ENCODE measurements at regions of chr7 and their contacts with region 1.

Region 1: DNA sequence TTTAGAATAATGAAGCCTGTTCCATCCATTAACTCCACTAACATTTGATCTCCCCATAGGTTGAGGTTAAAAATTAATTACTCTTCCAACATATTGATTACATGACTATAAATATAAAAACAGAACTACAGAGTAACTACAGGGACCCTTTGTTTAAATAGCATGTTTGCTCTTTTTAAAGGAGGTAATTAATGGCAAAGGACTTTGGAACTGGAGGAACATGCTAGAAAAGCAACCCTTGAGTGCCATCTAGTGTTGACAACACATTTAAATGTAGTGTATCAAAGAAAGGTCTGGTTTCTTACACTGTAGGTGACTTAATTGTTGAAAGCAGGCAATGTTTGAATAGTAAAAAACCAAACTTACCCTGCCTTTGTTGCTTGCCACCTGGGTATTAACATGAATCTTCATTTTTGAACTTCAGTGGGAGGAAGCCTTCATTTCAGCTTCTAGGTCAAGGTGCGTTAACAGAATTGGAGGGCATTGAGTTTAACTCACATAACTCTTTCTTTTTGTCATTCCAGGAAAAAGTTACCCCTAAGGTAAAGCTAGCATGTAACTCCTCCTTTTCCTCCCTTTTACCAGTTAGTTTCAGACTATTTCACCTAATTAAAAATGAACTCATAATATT is 52.6 kb upstream of the CAPZA2 start:
- DNase-seq: peak; percentile 65
- ATAC-seq: peak; percentile 41
- H3K4me3 ChIP-seq: no peak overlapping the region
- H3K4me3 Mint-ChIP-seq: no peak overlapping the region
- H3K27ac ChIP-seq: no peak overlapping the region
- H3K27ac Mint-ChIP-seq: no peak overlapping the region
- H3K4me1 ChIP-seq: no peaks in the 10 kb centered on the region
- H3K4me1 Mint-ChIP-seq: no peaks in the 10 kb centered on the region
- H3K27me3 ChIP-seq: peaks cover 0 to 4% (median 0%) of the 10 kb centered on the region in 4 experiments
- H3K27me3 Mint-ChIP-seq: peaks cover 8% of the 10 kb centered on the region
- CTCF ChIP-seq: peak; percentile 75

Region 2: GRCh38 chr7:116138202-116138801 is 671.4 kb before region 1 on chr7:
- CTCF ChIA-PET with region 1: interaction called, 8 read pairs
- POLR2A ChIA-PET with region 1: no interaction called
- intact Hi-C with region 1: loop called (anchors 1 kb)
- DNase-seq: peak; percentile 74
- ATAC-seq: peak; percentile 85
- H3K4me3 ChIP-seq: no peak overlapping the region
- H3K4me3 Mint-ChIP-seq: no peak overlapping the region
- H3K27ac ChIP-seq: no peak overlapping the region
- H3K27ac Mint-ChIP-seq: no peak overlapping the region
- H3K4me1 ChIP-seq: peaks cover 6 to 7% of the 10 kb centered on the region in 2 donors
- H3K4me1 Mint-ChIP-seq: peaks cover 23% of the 10 kb centered on the region
- H3K27me3 ChIP-seq: no peaks in the 10 kb centered on the region
- H3K27me3 Mint-ChIP-seq: no peaks in the 10 kb centered on the region
- CTCF ChIP-seq: peak; percentile 89

Region 3: DNA sequence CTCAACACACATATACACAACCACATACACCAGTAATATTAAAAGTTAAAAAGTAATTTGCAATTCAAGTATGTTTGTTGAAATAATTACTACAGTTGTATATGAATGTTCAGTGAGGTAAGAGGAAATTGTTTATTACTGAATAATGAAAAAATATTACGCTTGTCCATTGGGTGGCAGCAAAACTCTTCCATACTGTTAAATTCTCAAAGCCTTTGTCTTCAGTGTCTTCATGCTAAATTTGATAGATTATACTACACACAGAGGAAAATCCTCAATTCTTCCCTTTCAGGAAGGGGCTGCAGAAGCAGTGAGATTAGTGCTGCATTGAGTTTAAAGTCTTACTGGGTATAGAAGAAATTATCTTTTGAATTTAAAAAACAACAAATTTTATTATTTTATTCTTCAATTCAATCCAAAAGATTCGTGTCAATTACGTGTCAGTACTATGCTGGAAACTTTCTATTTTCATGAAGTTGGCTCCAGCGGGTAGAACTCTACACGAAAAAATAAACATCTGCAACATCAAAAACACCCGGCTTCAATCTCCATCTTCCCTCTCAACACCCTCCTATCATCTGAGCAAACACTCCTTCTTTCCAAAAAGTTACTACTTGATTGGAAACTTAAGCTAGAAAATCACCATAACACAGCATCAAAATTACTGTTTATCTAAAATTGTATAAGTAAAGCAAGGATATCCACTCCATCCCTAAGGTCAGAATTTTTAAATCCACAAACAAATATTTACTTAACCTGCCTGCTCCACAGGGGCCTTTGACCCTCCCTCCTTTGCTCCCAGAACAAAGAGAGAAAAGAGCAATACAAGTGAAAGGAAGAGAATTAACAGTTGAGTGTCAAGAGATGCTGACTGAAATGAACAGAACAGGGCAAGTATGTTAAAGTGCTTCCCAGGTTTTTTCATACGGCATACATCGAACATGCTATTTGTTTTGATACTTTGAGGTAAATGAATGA is 636.4 kb before region 1 on chr7:
- CTCF ChIA-PET with region 1: interaction called, 8 read pairs
- POLR2A ChIA-PET with region 1: no interaction called
- intact Hi-C with region 1: loop called (anchors 1 kb)
- DNase-seq: peak; percentile 74
- ATAC-seq: peak; percentile 61
- H3K4me3 ChIP-seq: no peak overlapping the region
- H3K4me3 Mint-ChIP-seq: no peak overlapping the region
- H3K27ac ChIP-seq: no peak overlapping the region
- H3K27ac Mint-ChIP-seq: no peak overlapping the region
- H3K4me1 ChIP-seq: no peaks in the 10 kb centered on the region
- H3K4me1 Mint-ChIP-seq: peaks cover 2% of the 10 kb centered on the region
- H3K27me3 ChIP-seq: no peaks in the 10 kb centered on the region
- H3K27me3 Mint-ChIP-seq: no peaks in the 10 kb centered on the region
- CTCF ChIP-seq: peak; percentile 82

Region 4: GRCh38 chr7:116258734-116259133 is 551.0 kb before region 1 on chr7:
- CTCF ChIA-PET with region 1: interaction called, 29 read pairs
- POLR2A ChIA-PET with region 1: no interaction called
- intact Hi-C with region 1: loop called (anchors 1 kb)
- DNase-seq: peak; percentile 63
- ATAC-seq: peak; percentile 51
- H3K4me3 ChIP-seq: no peak overlapping the region
- H3K4me3 Mint-ChIP-seq: no peak overlapping the region
- H3K27ac ChIP-seq: no peak overlapping the region
- H3K27ac Mint-ChIP-seq: no peak overlapping the region
- H3K4me1 ChIP-seq: no peaks in the 10 kb centered on the region
- H3K4me1 Mint-ChIP-seq: peaks cover 2% of the 10 kb centered on the region
- H3K27me3 ChIP-seq: no peaks in the 10 kb centered on the region
- H3K27me3 Mint-ChIP-seq: no peaks in the 10 kb centered on the region
- CTCF ChIP-seq: peak; percentile 86

Region 5: DNA sequence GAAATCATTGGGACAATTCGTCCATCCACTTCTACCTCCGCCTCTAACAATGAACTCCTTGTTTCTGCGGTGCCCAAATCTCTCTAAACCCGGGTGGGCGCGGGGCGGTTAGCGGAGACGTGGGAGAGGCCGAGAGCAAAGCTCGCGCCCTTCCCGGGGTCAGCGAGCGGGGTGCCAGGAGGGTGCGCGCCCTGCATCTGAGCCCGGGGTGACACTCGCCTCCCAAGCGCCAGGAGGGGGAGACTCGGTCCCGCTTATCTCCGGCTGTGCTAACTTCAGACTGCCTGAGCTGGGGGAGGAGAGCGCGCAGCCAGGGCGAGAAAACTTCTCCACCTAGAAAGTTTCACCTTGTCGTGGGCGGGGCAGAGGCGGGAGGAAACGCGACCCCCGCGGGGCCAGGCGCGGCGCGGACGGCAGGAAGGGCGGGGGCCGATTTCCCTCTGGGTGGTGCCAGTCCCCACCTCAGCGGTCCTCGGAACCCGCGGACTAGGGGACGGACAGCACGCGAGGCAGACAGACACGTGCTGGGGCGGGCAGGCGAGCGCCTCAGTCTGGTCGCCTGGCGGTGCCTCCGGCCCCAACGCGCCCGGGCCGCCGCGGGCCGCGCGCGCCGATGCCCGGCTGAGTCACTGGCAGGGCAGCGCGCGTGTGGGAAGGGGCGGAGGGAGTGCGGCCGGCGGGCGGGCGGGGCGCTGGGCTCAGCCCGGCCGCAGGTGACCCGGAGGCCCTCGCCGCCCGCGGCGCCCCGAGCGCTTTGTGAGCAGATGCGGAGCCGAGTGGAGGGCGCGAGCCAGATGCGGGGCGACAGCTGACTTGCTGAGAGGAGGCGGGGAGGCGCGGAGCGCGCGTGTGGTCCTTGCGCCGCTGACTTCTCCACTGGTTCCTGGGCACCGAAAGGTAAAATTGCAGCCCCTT is 137.8 kb before region 1 on chr7 and contains the start of gene MET:
- CTCF ChIA-PET with region 1: interaction called, 13 read pairs
- POLR2A ChIA-PET with region 1: no interaction called
- intact Hi-C with region 1: loop called (anchors 1 kb)
- DNase-seq: peak; percentile 71
- ATAC-seq: peak; percentile 83
- H3K4me3 ChIP-seq: peak within 1 kb of the TSS; percentile 28 to 54 (median 39)
- H3K4me3 Mint-ChIP-seq: peak within 1 kb of the TSS; percentile 82
- H3K27ac ChIP-seq: no peak within 1 kb of the TSS
- H3K27ac Mint-ChIP-seq: no peak within 1 kb of the TSS
- H3K4me1 ChIP-seq: peaks cover 14 to 15% of the 10 kb centered on the region in 2 donors
- H3K4me1 Mint-ChIP-seq: peaks cover 18% of the 10 kb centered on the region
- H3K27me3 ChIP-seq: peaks cover 0 to 52% (median 47%) of the 10 kb centered on the region in 4 experiments
- H3K27me3 Mint-ChIP-seq: peaks cover 69% of the 10 kb centered on the region
- CTCF ChIP-seq: no peak
- total RNA-seq, gene MET: 0.59 and 1.9 TPM in 2 replicates

Region 6: GRCh38 chr7:116786791-116787443 is 22.8 kb before region 1 on chr7:
- CTCF ChIA-PET with region 1: interaction called, 12 read pairs
- POLR2A ChIA-PET with region 1: no interaction called
- intact Hi-C with region 1: no loop called
- DNase-seq: peak; percentile 76
- ATAC-seq: peak; percentile 96
- H3K4me3 ChIP-seq: no peak overlapping the region
- H3K4me3 Mint-ChIP-seq: no peak overlapping the region
- H3K27ac ChIP-seq: no peak overlapping the region
- H3K27ac Mint-ChIP-seq: no peak overlapping the region
- H3K4me1 ChIP-seq: peaks cover 4 to 11% of the 10 kb centered on the region in 2 donors
- H3K4me1 Mint-ChIP-seq: no peaks in the 10 kb centered on the region
- H3K27me3 ChIP-seq: no peaks in the 10 kb centered on the region
- H3K27me3 Mint-ChIP-seq: no peaks in the 10 kb centered on the region
- CTCF ChIP-seq: peak; percentile 60

Region 7: GRCh38 chr7:116820149-116820548 is 10.4 kb after region 1 on chr7:
- CTCF ChIA-PET with region 1: interaction called, 13 read pairs
- POLR2A ChIA-PET with region 1: no interaction called
- intact Hi-C with region 1: no loop called
- DNase-seq: no peak
- ATAC-seq: no peak
- H3K4me3 ChIP-seq: no peak overlapping the region
- H3K4me3 Mint-ChIP-seq: no peak overlapping the region
- H3K27ac ChIP-seq: no peak overlapping the region
- H3K27ac Mint-ChIP-seq: no peak overlapping the region
- H3K4me1 ChIP-seq: peaks cover 0 to 7% of the 10 kb centered on the region in 2 donors
- H3K4me1 Mint-ChIP-seq: peaks cover 7% of the 10 kb centered on the region
- H3K27me3 ChIP-seq: peaks cover 0 to under 1% (median 0%) of the 10 kb centered on the region in 4 experiments
- H3K27me3 Mint-ChIP-seq: peaks cover 23% of the 10 kb centered on the region
- CTCF ChIP-seq: no peak

Region 8: DNA sequence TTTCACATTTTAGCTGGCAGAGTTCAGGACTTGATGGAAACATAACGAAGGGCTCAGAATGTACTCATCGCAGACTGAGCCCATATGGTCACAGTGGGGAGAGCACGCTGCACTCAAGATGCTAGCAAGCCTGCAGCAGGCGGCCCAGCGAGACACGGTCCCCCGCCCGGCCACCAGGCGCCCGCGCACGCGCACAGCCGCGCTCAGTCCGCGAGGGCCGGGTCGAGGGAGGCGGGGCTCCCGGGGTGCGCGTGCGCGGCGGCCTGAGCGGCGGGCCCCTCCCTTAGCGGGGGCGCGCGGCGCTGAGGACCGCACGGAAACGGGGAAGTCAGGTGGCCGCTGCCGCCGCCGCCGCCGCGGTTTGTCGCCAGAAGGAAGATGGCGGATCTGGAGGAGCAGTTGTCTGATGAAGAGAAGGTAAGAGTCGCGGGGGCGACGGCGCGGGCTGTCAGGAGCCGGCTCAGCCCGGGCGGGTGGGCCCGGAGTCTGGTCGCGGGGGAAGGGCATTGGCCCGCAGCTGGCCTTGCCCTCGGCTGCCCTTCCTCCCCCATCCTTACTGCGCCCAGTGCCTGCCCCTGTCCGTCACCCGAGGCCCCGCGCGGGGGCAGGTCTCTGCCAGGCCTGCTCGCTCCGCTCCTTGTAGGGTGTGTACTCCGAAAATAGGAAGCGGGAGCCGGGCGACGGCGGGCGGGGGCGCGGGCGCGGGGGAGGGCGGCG is 52.6 kb after region 1 on chr7 and contains the start of gene CAPZA2:
- CTCF ChIA-PET with region 1: no interaction called
- POLR2A ChIA-PET with region 1: no interaction called
- intact Hi-C with region 1: no loop called
- DNase-seq: peak; percentile 96
- ATAC-seq: peak; percentile 86
- H3K4me3 ChIP-seq: peak within 1 kb of the TSS; percentile 63 to 93 (median 87)
- H3K4me3 Mint-ChIP-seq: peak within 1 kb of the TSS; percentile 92
- H3K27ac ChIP-seq: peak within 1 kb of the TSS; percentile 80 to 90
- H3K27ac Mint-ChIP-seq: peak within 1 kb of the TSS; percentile 92
- H3K4me1 ChIP-seq: peaks cover 17 to 19% of the 10 kb centered on the region in 2 donors
- H3K4me1 Mint-ChIP-seq: peaks cover 38% of the 10 kb centered on the region
- H3K27me3 ChIP-seq: no peaks in the 10 kb centered on the region
- H3K27me3 Mint-ChIP-seq: peaks cover 18% of the 10 kb centered on the region
- CTCF ChIP-seq: peak; percentile 58
- total RNA-seq, gene CAPZA2: 79.0 and 93.7 TPM in 2 replicates

Region 9: DNA sequence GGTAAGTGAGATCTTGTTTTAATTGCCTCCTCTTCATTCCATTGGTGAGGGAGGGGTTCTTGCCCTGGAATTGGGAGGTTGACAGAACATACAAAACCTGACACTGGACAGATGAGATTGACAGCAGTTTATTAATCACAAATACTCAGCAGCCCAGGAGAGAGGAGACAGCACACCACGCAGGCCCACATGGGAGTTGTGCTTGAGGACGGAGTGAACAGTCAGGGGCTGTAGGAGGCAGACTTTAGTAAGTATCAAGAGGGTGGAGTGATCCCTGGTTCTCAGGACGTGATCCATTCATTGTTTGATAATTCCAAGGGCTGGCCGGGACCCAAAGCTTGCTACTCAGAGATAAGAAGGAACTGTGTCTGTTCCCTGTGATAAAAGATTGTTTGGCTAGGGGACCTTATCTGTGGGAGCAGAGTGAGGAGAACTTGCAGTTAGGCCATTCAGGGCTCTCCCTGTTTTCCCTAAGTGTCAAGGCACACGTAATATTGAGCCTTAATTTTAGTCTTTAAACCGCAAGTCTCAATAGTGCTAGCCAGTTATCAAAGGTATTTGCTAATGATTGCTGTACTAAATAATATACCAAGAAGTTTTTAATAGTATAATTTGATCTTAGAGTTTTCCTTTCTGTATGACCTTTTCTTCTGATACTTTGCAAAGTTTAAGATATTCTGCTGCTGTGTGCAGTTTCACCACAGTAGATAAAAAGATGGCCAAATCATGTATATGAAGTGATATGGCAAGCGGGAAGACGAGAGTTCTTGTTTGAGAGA is 67.1 kb after region 1 on chr7:
- CTCF ChIA-PET with region 1: no interaction called
- POLR2A ChIA-PET with region 1: no interaction called
- intact Hi-C with region 1: no loop called
- DNase-seq: no peak
- ATAC-seq: no peak
- H3K4me3 ChIP-seq: no peak overlapping the region
- H3K4me3 Mint-ChIP-seq: no peak overlapping the region
- H3K27ac ChIP-seq: no peak overlapping the region
- H3K27ac Mint-ChIP-seq: no peak overlapping the region
- H3K4me1 ChIP-seq: peaks cover 9 to 12% of the 10 kb centered on the region in 2 donors
- H3K4me1 Mint-ChIP-seq: peaks cover 30% of the 10 kb centered on the region
- H3K27me3 ChIP-seq: no peaks in the 10 kb centered on the region
- H3K27me3 Mint-ChIP-seq: no peaks in the 10 kb centered on the region
- CTCF ChIP-seq: no peak

Region 10: GRCh38 chr7:117202511-117202910 is 392.8 kb after region 1 on chr7:
- CTCF ChIA-PET with region 1: no interaction called
- POLR2A ChIA-PET with region 1: no interaction called
- intact Hi-C with region 1: no loop called
- DNase-seq: no peak
- ATAC-seq: no peak
- H3K4me3 ChIP-seq: no peak overlapping the region
- H3K4me3 Mint-ChIP-seq: no peak overlapping the region
- H3K27ac ChIP-seq: no peak overlapping the region
- H3K27ac Mint-ChIP-seq: no peak overlapping the region
- H3K4me1 ChIP-seq: no peaks in the 10 kb centered on the region
- H3K4me1 Mint-ChIP-seq: no peaks in the 10 kb centered on the region
- H3K27me3 ChIP-seq: no peaks in the 10 kb centered on the region
- H3K27me3 Mint-ChIP-seq: no peaks in the 10 kb centered on the region
- CTCF ChIP-seq: no peak